A549 (cell line): ENCODE measurements at regions of chr1 and their contacts with region 1.

Region 1: GRCh38 chr1:88998716-88999115 is 6.3 kb upstream of the KYAT3 start:
- DNase-seq: peak; percentile 21 to 52
- ATAC-seq: peak; percentile 83 to 91
- H3K4me3 ChIP-seq: no peak overlapping the region
- H3K27ac ChIP-seq: no peak overlapping the region
- H3K4me1 ChIP-seq: no peaks in the 10 kb centered on the region
- CTCF ChIP-seq: peak; percentile 62
- EP300 ChIP-seq: no peak
- POLR2A ChIP-seq: no peak
- RAD21 ChIP-seq: peak; percentile 69 to 75

Region 2: DNA sequence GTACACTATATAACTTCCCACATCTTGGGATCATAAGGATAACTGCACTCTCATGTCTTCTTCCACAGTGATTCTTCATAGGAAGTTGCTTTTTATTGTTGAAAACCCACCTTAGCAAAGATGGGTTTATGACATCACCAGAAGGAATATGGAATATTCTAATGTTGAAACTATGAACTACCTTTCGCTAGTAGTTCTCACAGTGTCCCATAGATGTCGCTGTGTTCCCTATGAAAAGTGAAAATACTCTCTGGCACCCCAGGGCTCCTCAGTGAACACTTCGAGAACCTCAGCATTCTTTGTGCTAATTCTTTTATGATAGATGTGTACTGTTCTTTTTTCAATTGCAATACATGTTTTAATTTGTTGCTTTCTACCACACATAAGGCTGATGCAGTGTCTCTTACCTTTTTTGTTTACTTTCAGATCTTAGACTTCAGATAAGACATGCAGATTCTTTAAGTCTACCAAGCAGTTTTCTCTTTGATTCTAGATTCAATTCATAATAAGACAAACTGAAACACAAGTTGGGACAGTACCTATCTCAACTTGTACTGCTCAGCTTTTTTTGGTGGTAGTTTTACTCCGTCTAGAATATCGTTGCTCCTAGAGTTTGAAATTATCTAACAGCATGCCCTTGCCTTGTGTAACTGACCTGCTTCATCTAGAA is 198.2 kb before region 1 on chr1:
- CTCF ChIA-PET with region 1: no interaction called
- POLR2A ChIA-PET with region 1: no interaction called
- DNase-seq: peak; percentile 9 to 41
- ATAC-seq: peak; percentile 8 to 71; a peak in 3 of 6 replicates
- H3K4me3 ChIP-seq: no peak overlapping the region
- H3K27ac ChIP-seq: no peak overlapping the region
- H3K4me1 ChIP-seq: 0 out of 3 replicates have a peak, but pooled peaks cover 5% of the 10 kb centered on the region
- CTCF ChIP-seq: peak; percentile 49
- EP300 ChIP-seq: no peak
- POLR2A ChIP-seq: no peak
- RAD21 ChIP-seq: no peak; a peak in 1 of 5 replicates

Region 3: DNA sequence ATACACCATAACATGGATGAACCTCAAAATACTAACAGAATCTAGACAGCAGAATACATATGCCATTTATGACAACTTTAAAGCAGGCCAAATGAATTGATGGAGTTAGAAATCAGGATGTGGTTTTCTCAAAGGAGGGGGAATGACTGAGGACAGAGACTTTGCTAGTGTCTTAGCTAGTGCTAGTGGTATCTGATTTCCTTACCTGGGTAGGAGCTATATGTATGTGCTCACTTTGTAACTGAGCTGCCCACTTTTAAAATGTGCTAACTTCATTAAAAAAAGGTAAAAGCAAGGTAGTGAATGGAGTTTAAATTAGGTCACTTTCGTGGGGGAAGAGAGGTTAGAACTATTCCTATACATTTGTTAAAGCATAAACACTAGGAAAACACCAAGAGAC is 110.0 kb before region 1 on chr1:
- CTCF ChIA-PET with region 1: no interaction called
- POLR2A ChIA-PET with region 1: no interaction called
- DNase-seq: no peak
- ATAC-seq: no peak
- H3K4me3 ChIP-seq: no peak overlapping the region
- H3K27ac ChIP-seq: no peak overlapping the region
- H3K4me1 ChIP-seq: peaks cover 12% of the 10 kb centered on the region; the same call in 1 of the 3 replicates
- CTCF ChIP-seq: no peak
- EP300 ChIP-seq: no peak
- POLR2A ChIP-seq: no peak
- RAD21 ChIP-seq: no peak

Region 4: DNA sequence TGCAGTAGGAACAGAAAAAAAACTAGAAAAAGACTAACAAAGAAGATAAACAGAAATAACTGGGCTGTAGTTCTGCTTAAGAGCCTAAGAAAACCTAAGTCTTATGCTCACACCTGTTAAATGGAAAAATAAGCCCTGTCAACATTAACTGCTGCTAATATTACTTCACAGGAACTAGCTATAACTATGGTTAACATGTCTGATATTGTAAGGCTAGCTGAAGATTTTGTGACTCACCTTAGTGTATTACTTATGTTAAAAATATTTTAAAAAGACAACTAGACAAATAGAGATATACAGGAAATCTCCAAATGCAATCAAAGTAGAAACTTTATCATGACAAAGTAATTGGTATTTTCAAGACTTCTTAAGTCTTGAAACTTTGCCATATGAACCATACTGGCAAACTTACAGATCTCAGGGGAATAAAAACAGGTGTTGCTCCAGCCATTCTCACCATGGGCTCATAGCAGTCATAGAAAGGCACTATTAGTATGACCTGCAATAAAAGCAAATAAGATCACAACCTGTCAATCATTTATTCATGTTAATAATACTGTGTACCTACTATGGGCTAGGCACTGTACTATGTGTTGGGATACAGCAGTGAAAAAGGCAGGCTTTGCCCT is 37.0 kb before region 1 on chr1:
- CTCF ChIA-PET with region 1: no interaction called
- POLR2A ChIA-PET with region 1: no interaction called
- DNase-seq: no peak
- ATAC-seq: no peak
- H3K4me3 ChIP-seq: no peak overlapping the region
- H3K27ac ChIP-seq: no peak overlapping the region
- H3K4me1 ChIP-seq: no peaks in the 10 kb centered on the region
- CTCF ChIP-seq: no peak
- EP300 ChIP-seq: no peak
- POLR2A ChIP-seq: no peak
- RAD21 ChIP-seq: no peak

Region 5: DNA sequence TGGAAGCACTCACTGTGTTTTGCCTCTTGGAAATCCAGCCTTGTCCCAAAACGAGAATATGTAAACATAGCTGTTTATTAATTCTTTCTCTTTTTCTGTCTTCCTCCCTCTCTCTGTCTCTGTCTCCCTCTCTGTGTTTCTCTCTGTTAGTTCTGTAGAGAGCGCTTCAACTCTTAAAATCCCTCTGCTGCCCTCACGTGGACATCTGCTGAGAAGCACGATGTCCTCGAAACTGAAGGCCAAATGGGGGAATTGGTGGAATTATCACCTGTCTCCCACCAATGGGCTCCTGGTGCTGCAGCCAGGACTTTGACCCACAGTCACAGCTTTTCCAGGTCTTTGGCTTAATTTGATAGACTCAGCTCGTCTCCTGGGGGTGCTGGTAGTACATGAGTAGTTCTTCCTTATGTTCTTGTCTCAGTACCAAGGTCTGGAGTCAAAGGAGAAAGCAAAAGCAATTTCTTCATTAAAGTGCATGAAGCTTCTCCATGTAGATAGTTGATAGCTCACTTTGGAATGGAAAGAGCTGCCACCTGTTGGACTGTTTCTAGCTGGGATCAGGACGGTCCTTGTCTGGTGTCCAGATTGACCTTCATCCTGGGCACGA is 359.7 kb after region 1 on chr1:
- CTCF ChIA-PET with region 1: interaction called, 13 read pairs
- POLR2A ChIA-PET with region 1: no interaction called
- DNase-seq: peak; percentile 19 to 57
- ATAC-seq: peak; percentile 90 to 91
- H3K4me3 ChIP-seq: no peak overlapping the region
- H3K27ac ChIP-seq: no peak overlapping the region
- H3K4me1 ChIP-seq: no peaks in the 10 kb centered on the region
- CTCF ChIP-seq: peak; percentile 58
- EP300 ChIP-seq: no peak
- POLR2A ChIP-seq: no peak
- RAD21 ChIP-seq: peak; percentile 56 to 62